BJ (cell line): ENCODE measurements at regions of chr1 and their contacts with region 1.

Region 1: DNA sequence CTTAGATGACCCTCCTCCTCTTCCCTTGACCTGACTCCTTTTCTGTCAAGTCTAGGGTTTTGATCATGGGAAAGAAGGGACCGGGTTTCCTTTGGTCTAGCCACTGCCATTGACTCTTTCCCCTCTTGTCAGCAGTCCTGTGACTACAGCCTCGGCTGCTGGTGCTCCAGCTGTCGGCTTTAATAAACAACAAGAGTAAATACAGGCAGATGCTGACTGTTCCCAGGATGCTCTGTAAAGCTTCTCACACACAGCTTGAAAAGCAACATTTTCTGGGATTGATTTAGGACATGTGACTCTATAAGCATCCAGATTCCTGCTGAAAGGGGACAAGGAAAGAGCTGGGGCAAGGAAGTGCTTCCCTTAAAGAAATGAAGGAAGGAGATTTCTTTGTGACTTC is 53.5 kb upstream of the CTTNBP2NL start:
- DNase-seq: no peak
- H3K4me3 ChIP-seq: no peak overlapping the region
- H3K27me3 ChIP-seq: peaks cover 7% of the 10 kb centered on the region
- CTCF ChIP-seq: no peak

Region 2: GRCh38 chr1:112358798-112359408 is 16.3 kb after region 1 on chr1:
- CTCF ChIA-PET with region 1: interaction called, 10 read pairs
- POLR2A ChIA-PET with region 1: no interaction called
- DNase-seq: no peak
- H3K4me3 ChIP-seq: no peak overlapping the region
- H3K27me3 ChIP-seq: peaks cover 21% of the 10 kb centered on the region
- CTCF ChIP-seq: peak; percentile 91

Region 3: GRCh38 chr1:112522621-112523020 is 180.1 kb after region 1 on chr1:
- CTCF ChIA-PET with region 1: no interaction called
- POLR2A ChIA-PET with region 1: no interaction called
- DNase-seq: peak; percentile 66
- H3K4me3 ChIP-seq: no peak overlapping the region
- H3K27me3 ChIP-seq: no peaks in the 10 kb centered on the region
- CTCF ChIP-seq: no peak